ENCODE measurements at regions of chr4 and their contacts with region 1.

Region 1: GRCh38 chr4:6720202-6720699 is 4.3 kb downstream of the BLOC1S4 start:
- DNase-seq: peak; percentile 85
- H3K4me3 ChIP-seq: peak overlapping the region; percentile 56; the same call in 1 of the 2 replicates
- H3K27ac ChIP-seq: no peak overlapping the region
- H3K4me1 ChIP-seq: peaks cover 11% of the 10 kb centered on the region; the same call in 1 of the 2 replicates
- H3K27me3 ChIP-seq: no peaks in the 10 kb centered on the region

Region 2: GRCh38 chr4:6873792-6874461 is 153.7 kb after region 1 on chr4:
- in situ Hi-C with region 1: loop called (anchors 10 kb)
- DNase-seq: peak; percentile 72
- H3K4me3 ChIP-seq: no peak overlapping the region
- H3K27ac ChIP-seq: no peak overlapping the region
- H3K4me1 ChIP-seq: peaks cover 24% of the 10 kb centered on the region
- H3K27me3 ChIP-seq: no peaks in the 10 kb centered on the region

Region 3: DNA sequence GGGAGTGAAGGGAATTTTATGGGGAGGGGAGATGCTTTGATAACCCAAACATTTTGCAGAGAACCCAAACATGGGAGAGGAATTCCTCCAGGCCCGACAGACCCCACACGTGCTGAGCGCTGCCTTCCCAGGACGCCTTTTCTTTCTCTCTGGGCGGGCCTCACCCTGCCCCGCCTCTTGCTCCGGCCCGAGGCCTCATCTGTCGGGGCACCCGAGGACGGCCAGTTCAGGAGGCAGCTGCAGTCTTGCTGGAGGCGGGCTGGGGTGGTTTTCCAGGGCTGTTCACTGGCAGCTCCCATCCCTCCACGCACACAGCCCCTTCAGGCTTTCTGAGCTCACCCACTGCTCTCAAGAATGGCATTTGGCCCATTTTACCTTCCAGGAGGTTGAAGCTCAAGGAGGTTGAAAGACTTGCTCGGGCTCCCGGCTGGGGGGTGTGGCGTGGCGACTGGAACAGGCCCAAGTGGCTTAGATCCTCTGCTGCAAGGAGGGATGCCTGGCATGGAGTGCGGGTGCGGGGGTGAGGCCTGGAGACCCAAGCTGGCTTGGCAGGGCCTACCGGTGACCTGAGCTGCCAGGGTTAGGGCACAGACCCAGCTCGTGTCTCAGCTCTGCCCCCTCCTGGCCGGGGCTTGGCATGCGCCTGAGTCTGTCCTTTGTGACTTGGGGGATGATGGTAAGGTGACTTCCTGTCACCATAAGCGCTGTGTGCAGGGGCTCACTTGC is 615.3 kb after region 1 on chr4:
- in situ Hi-C with region 1: no loop called
- DNase-seq: peak; percentile 60
- H3K4me3 ChIP-seq: no peak overlapping the region
- H3K27ac ChIP-seq: no peak overlapping the region
- H3K4me1 ChIP-seq: 0 out of 2 replicates have a peak, but pooled peaks cover 4% of the 10 kb centered on the region
- H3K27me3 ChIP-seq: no peaks in the 10 kb centered on the region